Gastrocnemius medialis (tissue), 4 donors: ENCODE measurements at regions of chr16 and their contacts with region 1.

Region 1: GRCh38 chr16:31215287-31216162 is 1.4 kb downstream of the PYDC1 start:
- DNase-seq: peak; percentile 60 to 83
- ATAC-seq: peak; percentile 52 to 68
- H3K4me3 ChIP-seq: peak overlapping the region; percentile 75 to 82 (median 78)
- H3K27ac ChIP-seq: peak overlapping the region; percentile 99 to 100 (median 100)
- H3K4me1 ChIP-seq: peaks cover 42 to 47% of the 10 kb centered on the region in 2 donors
- H3K27me3 ChIP-seq: no peaks in the 10 kb centered on the region
- CTCF ChIP-seq: no peak
- POLR2A ChIP-seq: peak; percentile 58 to 60

Region 2: DNA sequence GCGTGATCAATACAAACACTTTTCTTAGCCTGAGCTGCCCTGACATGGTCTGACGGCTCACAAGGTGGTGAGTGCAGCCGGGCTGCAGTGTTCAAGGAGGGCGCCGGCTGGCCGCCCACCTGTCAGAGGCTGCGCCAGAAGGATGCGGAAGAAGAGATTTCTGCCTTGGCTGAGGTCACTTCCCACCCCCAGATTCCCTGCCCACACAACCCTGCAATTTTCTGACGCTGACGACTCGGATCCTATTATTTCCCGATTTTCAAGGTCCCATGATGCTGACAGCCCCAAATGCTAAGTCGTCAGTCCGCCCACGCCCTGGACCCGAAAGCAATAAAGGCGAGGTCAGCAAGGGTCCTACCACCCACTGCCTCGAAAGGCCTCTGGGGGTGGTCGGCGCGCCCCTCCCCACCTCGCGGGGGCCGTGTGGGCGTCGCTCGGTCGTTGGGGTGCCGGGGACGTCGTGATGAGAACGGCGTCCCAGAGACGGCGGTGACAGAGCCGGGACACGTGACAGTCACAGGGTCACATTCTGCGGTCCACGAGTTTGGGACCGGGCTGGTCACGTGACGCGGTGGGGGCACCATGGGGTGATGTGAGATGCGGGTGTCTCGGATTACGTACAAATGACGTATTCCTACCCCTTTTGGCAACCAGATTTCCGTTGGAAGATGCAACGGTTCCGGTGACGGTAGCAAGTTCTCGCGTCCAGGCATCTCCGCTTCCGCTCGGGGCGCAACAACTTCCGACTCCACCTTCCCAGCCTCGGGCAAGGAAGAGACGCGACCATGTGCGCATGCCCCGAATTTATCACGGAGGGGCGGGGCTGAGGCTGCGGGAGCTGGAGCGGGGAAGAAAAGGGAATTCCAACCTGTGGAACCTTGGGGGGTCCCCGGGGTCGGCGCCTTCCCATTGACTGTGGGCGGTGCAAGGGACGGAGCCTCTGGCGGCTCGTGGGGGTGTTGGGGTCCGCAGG is 182.5 kb before region 1 on chr16 and contains the start of gene STX4:
- in situ Hi-C with region 1: no loop called
- intact Hi-C with region 1: loop called (anchors 5 kb)
- DNase-seq: peak; percentile 97 to 98
- ATAC-seq: peak; percentile 91 to 93
- H3K4me3 ChIP-seq: peak within 1 kb of the TSS; percentile 82 to 99 (median 95)
- H3K27ac ChIP-seq: peak within 1 kb of the TSS; percentile 91 to 98 (median 92)
- H3K4me1 ChIP-seq: peaks cover 8 to 14% of the 10 kb centered on the region in 2 donors
- H3K27me3 ChIP-seq: no peaks in the 10 kb centered on the region
- CTCF ChIP-seq: peak in 3 of 5 experiments; percentile 2 to 54 (median 44)
- POLR2A ChIP-seq: peak; percentile 54 to 68
- total RNA-seq, gene STX4: 14.9 to 24.3 (median 21.4) TPM

Region 3: DNA sequence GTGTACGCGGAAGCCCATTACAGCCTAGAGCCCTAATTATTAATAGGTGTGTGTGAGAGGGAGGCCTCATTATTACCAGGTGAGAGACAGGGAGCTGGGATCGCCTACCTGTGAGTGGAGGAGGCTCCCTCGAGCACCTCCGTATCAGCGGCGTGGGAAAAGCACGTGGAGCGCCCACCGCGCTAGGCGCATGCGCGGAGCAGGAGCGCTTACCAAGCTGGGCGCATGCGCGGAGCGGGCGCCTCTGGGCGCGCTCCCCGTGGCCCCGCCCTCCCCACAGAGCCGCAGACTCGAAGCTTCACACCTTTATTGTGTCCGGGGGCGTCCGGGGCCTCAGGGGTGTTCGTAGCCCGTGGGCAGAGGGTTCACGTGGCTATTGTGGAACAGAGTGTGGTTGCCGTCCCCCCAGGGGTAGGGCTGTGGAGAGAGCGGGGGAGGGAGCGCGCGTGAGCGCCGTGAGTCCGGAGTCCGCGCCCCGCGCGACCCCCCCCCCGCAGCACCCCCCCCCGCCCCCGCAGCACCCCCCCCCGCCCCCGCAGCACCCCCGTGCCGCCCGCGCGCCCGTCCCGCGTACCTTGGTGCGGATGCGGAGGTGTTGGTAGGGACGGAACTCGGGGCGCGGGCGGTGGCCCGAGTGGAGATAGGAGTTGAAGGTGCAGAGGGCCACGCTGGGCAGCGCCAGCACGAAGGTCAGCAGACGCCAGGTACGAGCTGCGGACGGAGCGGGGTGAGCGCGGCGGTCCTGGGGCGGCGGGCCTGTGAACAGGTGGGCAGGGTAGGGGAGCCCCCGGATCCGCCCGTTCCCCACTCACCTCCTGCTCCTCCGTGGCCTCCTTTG is 212.1 kb after region 1 on chr16:
- in situ Hi-C with region 1: loop called in 1 of 4 experiments (anchors 25 kb)
- intact Hi-C with region 1: loop called (anchors 2 kb)
- DNase-seq: peak; percentile 62 to 84
- ATAC-seq: peak; percentile 12 to 28
- H3K4me3 ChIP-seq: peak overlapping the region; percentile 67 to 83 (median 79)
- H3K27ac ChIP-seq: peak overlapping the region; percentile 92 to 100 (median 98)
- H3K4me1 ChIP-seq: peaks cover 62 to 77% of the 10 kb centered on the region in 2 donors
- H3K27me3 ChIP-seq: no peaks in the 10 kb centered on the region
- CTCF ChIP-seq: no peak
- POLR2A ChIP-seq: peak in 1 of 2 donors; percentile 10

Region 4: DNA sequence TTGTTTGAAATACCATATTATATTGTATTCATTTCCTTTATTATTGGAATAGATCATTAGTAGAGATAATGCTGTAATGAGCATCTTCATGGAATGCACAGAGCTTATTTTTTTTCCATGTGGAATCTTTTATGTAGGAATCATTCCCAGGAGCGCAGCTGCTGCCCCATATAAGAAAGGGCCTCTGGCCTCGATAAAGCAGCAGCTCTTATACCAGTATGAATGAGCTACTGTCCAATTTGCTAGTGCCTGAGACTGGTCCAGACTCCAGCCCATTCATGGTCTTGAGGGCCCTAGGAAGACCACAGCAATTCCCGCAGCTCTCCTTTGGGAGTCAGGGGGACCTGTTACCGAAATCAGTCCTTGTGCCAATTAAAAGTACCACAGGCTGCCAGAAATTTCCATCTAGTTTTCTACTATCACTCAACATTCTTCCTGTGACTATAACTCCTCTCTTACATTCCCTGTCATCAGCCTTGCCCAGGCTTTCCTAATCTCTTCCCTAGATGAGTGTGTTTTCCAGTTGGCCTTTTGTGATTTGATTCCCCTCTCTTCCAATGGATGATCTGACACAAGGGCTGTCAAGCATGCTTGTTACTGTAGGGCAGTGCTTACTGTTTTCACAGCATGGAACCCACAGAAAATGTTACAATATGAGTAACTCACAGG is 225.1 kb after region 1 on chr16:
- in situ Hi-C with region 1: no loop called
- intact Hi-C with region 1: loop called (anchors 5 kb)
- DNase-seq: no peak
- ATAC-seq: no peak
- H3K4me3 ChIP-seq: no peak overlapping the region
- H3K27ac ChIP-seq: peak overlapping the region; percentile 87 to 99 (median 96)
- H3K4me1 ChIP-seq: peaks cover 19 to 21% of the 10 kb centered on the region in 2 donors
- H3K27me3 ChIP-seq: no peaks in the 10 kb centered on the region
- CTCF ChIP-seq: no peak
- POLR2A ChIP-seq: no peak

Region 5: DNA sequence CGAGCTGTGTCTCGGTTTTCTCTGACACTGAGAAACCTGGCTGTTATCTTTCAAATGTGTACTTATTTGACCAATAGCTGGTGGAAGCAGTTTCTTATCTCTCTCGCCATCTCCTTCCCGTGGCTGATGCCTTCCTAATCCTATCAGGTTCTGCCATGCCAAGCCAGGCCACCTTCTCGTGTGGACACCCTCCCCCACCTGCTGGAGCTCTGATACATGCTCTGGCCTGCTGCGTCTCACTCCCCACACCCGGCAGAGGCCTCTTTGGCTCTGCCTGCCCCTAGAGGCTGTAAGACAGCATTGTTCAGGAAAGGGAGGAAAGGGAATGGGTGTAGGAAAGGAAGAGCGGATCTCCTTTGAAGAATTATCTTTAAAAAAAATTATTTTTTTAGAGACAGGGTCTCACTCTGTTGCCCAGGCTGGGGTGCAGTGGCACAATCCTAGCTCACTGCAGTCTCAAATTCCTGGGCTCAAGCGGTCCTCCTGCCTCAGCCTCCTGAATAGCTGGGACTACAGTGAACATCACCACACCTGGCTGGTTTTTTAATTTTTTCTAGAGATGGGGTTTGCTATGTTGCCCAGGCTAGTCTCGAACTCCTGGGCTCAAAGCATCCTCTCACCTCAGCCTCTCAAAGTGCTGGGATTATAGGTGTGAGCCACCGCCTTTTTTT is 236.3 kb after region 1 on chr16:
- in situ Hi-C with region 1: no loop called
- intact Hi-C with region 1: loop called (anchors 1 kb)
- DNase-seq: peak in 1 of 2 donors; percentile 84
- ATAC-seq: peak; percentile 12 to 33
- H3K4me3 ChIP-seq: no peak overlapping the region
- H3K27ac ChIP-seq: peak overlapping the region; percentile 90 to 99 (median 94)
- H3K4me1 ChIP-seq: peaks cover 52 to 53% of the 10 kb centered on the region in 2 donors
- H3K27me3 ChIP-seq: no peaks in the 10 kb centered on the region
- CTCF ChIP-seq: peak; percentile 47 to 71 (median 65)
- POLR2A ChIP-seq: no peak